GM18951 (cell line): ENCODE measurements at regions of chr1 and their contacts with region 1.

Region 1: GRCh38 chr1:19390901-19391595 is 78.9 kb downstream of the SLC66A1 start:
- POLR2A ChIP-seq: peak; percentile 18

Region 2: DNA sequence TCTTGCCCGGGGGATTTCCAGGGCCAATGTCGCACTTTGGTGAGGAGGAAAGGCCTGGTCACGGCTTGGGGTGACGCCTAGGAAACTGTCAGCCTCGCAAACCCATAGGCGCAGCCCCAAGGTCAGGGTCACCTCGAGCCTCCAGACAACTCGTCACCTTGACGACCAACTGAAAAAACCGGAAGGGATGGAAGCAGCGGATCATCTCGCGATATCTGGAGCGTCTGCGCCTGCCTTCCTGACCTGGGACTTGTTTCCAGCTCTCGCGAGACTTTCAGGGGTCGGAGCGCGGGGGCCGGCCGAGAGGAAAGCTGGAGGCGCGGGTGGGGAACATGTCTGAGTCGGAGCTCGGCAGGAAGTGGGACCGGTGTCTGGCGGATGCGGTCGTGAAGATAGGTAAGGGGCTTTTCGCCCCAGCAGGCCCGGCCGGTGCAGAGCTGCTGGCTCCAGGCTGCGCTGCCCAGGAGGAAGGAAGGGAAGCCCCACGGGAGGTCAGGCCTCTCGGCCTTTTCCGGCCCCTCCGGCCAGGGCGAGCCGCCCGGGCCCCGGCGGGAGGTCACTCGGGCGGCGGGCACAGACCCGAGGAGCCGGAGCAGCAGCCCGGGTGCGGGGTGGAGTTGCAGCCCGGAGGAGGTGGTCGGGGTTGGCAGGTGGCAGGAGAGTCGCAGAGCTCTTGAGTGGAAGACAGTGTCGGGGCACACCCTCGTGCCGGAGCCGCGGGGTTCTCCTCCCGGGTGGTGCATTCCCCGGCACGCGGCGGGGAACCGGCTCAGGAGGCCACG is 205.9 kb after region 1 on chr1:
- in situ Hi-C with region 1: loop called (anchors 25 kb)
- POLR2A ChIP-seq: peak; percentile 81